Endothelial cell of umbilical vein (primary cell): ENCODE measurements at regions of chr13 and their contacts with region 1.

Region 1: GRCh38 chr13:97295283-97296182 is 73.4 kb downstream of the MBNL2 start:
- DNase-seq: peak; percentile 85
- H3K4me3 ChIP-seq: peak overlapping the region in 1 of 3 experiments; percentile 29
- H3K27ac ChIP-seq: peak overlapping the region; percentile 98
- H3K4me1 ChIP-seq: peaks cover 37% of the 10 kb centered on the region
- H3K27me3 ChIP-seq: no peaks in the 10 kb centered on the region
- CTCF ChIP-seq: no peak
- POLR2A ChIP-seq: peak; percentile 24

Region 2: GRCh38 chr13:96159725-96160124 is 1135.8 kb before region 1 on chr13:
- CTCF ChIA-PET with region 1: no interaction called
- POLR2A ChIA-PET with region 1: no interaction called
- dilution Hi-C with region 1: no loop called
- intact Hi-C with region 1: no loop called
- DNase-seq: no peak
- H3K4me3 ChIP-seq: no peak overlapping the region
- H3K27ac ChIP-seq: no peak overlapping the region
- H3K4me1 ChIP-seq: no peaks in the 10 kb centered on the region
- H3K27me3 ChIP-seq: peaks cover 0 to 2% of the 10 kb centered on the region in 2 experiments
- CTCF ChIP-seq: no peak
- POLR2A ChIP-seq: no peak

Region 3: DNA sequence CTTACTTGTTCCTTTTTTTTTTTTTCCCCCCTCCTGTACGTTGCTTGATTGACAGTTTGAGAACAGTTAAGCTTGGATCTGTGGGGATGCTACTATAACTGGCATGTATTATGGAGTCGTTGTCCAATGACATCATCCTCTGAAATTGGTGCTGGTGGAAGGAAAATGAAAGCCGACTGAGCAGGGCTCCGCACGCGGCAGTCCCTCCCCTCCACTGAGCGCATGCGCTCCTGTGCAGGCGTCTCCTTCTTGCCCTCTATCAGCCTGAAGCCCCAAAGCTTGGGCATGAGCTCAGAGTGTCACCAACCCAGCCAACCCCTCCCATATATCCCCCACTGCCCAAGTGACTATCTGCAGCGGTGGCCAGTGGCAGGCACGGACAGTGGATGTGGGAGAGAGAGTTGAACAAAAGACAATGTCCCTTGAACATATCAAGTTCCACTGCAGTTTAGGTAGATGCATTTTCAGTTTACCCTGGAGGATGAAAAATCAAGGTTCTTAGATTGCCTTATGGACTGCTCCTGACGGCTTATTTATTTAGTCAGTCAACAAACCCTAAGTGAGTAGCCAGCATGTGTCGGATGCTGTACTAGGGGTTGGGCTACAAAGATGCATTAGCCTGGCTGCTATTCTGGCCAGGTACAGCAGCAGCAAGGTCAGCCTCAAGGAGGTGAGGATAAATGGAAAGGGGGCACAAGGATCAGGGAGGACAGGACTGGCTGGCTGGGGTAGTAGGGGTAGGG is 52.6 kb before region 1 on chr13:
- CTCF ChIA-PET with region 1: interaction called, 4 read pairs
- POLR2A ChIA-PET with region 1: no interaction called
- dilution Hi-C with region 1: no loop called
- intact Hi-C with region 1: loop called (anchors 1 kb)
- DNase-seq: peak; percentile 43
- H3K4me3 ChIP-seq: no peak overlapping the region
- H3K27ac ChIP-seq: peak overlapping the region; percentile 79
- H3K4me1 ChIP-seq: peaks cover 93% of the 10 kb centered on the region
- H3K27me3 ChIP-seq: no peaks in the 10 kb centered on the region
- CTCF ChIP-seq: no peak
- POLR2A ChIP-seq: no peak

Region 4: DNA sequence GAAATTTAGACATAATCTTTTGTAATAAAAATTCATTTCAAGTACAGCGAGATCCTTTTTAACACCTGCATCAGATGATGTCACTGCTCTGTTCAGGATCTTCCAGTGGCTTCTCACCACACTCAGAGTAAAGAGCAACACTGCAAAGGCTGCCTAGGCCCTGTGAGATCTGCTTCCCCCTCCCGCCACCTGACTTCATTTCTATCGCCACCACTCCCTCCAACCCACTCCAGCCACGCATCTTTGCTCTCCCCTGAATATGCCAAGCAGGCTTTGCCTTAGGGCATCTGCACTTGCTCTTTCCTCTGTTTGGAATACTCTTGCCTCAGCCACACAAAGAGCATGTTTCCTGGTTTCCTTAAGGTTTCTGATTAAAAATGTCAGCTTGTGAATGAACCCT is 15.1 kb before region 1 on chr13:
- CTCF ChIA-PET with region 1: interaction called, 8 read pairs
- POLR2A ChIA-PET with region 1: no interaction called
- dilution Hi-C with region 1: no loop called
- intact Hi-C with region 1: loop called (anchors 1 kb)
- DNase-seq: no peak
- H3K4me3 ChIP-seq: no peak overlapping the region
- H3K27ac ChIP-seq: peak overlapping the region; percentile 42
- H3K4me1 ChIP-seq: peaks cover 62% of the 10 kb centered on the region
- H3K27me3 ChIP-seq: no peaks in the 10 kb centered on the region
- CTCF ChIP-seq: no peak
- POLR2A ChIP-seq: no peak

Region 5: GRCh38 chr13:97307882-97308624 is 12.5 kb after region 1 on chr13:
- CTCF ChIA-PET with region 1: interaction called, 4 read pairs
- POLR2A ChIA-PET with region 1: interaction called, 3 read pairs
- dilution Hi-C with region 1: no loop called
- intact Hi-C with region 1: loop called (anchors 1 kb)
- DNase-seq: peak; percentile 87
- H3K4me3 ChIP-seq: no peak overlapping the region
- H3K27ac ChIP-seq: peak overlapping the region; percentile 83
- H3K4me1 ChIP-seq: peaks cover 38% of the 10 kb centered on the region
- H3K27me3 ChIP-seq: no peaks in the 10 kb centered on the region
- CTCF ChIP-seq: no peak
- POLR2A ChIP-seq: no peak